AG04450 (cell line): ENCODE measurements at regions of chr13 and their contacts with region 1.

Region 1: DNA sequence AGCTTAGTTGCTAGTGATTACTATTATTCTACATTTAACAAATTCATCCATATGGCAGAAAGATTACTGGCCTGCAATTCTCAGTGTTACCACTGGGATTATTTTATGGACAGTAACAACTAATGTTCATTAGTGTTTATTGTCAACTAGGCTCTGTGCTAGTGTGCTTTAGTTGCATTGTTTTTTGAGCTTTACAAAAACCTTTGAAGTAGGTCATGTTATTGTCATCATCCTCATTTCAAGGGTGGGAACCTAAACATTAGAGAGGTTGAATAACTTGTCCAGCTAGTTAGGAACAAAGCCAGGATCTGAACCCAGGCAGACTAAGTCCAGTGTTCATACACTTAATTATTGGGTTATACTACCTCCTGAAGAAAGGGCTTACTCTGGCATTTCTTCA is 27.8 kb upstream of the TDRD3 start:
- DNase-seq: no peak
- H3K4me3 ChIP-seq: no peak overlapping the region
- H3K27ac ChIP-seq: no peak overlapping the region
- H3K27me3 ChIP-seq: no peaks in the 10 kb centered on the region
- CTCF ChIP-seq: peak; percentile 43

Region 2: DNA sequence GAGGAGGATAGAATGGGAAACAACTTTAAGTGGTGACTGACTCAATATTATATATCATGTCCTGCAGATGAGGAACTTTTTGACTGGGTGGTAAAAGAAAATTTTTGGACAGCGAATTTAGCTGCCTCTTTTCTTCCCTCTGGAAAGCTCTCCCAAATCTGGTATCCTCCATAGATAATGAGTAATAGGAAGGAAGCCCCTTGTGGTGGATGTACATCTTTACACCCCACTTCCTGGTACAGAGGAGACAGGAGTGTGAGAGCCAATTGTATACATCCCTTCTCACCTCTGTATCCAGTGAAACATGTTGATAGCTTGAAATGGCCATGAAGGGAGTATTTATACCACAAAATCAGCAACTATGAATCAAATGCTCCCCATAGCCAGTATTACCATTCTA is 10.6 kb after region 1 on chr13:
- CTCF ChIA-PET with region 1: interaction called, 11 read pairs
- POLR2A ChIA-PET with region 1: no interaction called
- DNase-seq: no peak
- H3K4me3 ChIP-seq: no peak overlapping the region
- H3K27ac ChIP-seq: no peak overlapping the region
- H3K27me3 ChIP-seq: no peaks in the 10 kb centered on the region
- CTCF ChIP-seq: 0 out of 2 replicates have a peak, but pooled peaks have one; percentile 21

Region 3: GRCh38 chr13:60453490-60453889 is 84.2 kb after region 1 on chr13:
- CTCF ChIA-PET with region 1: no interaction called
- POLR2A ChIA-PET with region 1: no interaction called
- DNase-seq: no peak
- H3K4me3 ChIP-seq: no peak overlapping the region
- H3K27ac ChIP-seq: no peak overlapping the region
- H3K27me3 ChIP-seq: no peaks in the 10 kb centered on the region
- CTCF ChIP-seq: no peak